PC-3 (cell line): ENCODE measurements at regions of chr2 and their contacts with region 1.

Region 1: DNA sequence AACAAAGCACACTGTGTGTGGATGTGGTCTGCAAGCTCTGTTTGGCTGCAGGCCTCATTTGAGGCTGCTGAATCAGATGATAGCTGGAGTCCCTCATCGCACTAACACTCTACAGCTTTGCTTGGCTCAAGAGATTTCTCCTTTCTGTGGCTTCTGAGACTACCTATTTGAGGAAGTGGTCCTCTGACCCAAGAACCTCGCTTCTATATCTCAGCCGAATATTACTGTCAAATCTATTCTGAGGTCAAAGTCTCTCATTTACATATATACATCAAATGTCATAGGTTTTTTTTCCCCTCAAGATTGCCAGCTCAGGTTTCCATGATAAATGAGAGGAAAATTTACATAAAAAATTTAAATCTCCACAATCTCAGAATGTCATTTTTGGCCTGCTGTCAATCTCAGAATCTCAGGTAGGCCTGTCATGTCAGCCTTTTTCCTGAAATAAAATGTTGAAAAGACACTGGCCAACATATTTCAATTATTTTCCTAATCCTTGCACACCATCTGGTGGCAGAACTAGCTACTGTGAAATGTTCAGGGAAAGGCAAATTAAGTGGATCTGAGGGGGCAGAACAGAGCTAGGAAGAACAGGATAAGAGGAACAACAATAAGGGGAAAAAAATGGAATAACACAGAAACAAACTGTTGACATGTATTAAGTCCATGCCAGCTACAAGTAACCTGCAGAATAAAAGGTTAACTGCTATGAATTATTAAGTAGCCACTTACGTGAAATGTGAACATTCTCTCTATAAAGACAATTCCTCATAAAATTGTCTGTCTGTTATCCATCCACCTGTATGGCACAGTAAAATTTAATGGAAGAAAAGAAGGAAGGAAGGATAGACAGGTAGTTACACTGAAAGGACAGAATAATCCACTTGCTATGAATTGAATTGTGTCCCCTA is 39.3 kb downstream of the AP1S3 start:
- DNase-seq: peak; percentile 69
- ATAC-seq: peak; percentile 13
- H3K4me3 ChIP-seq: peak overlapping the region; percentile 39; the same call in 1 of the 2 replicates
- H3K27ac ChIP-seq: peak overlapping the region; percentile 97
- H3K4me1 ChIP-seq: peaks cover 70% of the 10 kb centered on the region
- H3K27me3 ChIP-seq: no peaks in the 10 kb centered on the region
- CTCF ChIP-seq: peak; percentile 84

Region 2: DNA sequence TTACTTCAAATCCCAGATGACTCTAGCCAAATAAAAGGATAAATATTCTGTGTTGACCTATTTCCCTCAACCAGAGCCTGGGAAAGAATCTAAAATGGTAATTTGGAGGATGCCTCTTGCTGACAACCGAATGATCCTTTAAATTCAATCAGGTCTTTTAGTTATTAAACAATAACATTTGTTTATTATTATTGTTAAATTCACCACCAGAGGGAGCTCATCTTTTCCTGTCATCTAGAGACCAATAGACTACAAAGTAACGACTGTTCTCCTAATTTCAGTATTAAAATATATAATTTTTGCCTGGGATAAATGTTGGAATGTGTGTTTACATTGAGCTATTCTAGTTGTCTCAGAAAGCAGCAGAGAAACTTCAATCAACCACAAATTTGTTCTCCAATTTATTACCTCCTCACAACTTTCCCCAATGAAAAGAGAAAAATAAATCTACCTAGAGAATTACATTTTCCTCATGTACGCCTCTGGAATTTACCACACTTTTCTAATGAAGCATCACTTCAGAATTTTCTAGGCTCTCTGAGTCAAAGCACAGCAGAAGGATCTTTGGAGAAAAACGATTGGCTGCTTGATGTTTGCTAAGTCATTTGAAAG is 338.6 kb before region 1 on chr2:
- CTCF ChIA-PET with region 1: no interaction called
- POLR2A ChIA-PET with region 1: no interaction called
- intact Hi-C with region 1: loop called (anchors 5 kb)
- DNase-seq: peak; percentile 62
- ATAC-seq: no peak
- H3K4me3 ChIP-seq: no peak overlapping the region
- H3K27ac ChIP-seq: no peak overlapping the region
- H3K4me1 ChIP-seq: peaks cover 27% of the 10 kb centered on the region
- H3K27me3 ChIP-seq: no peaks in the 10 kb centered on the region
- CTCF ChIP-seq: peak; percentile 66

Region 3: GRCh38 chr2:223613017-223613950 is 184.8 kb before region 1 on chr2:
- CTCF ChIA-PET with region 1: no interaction called
- POLR2A ChIA-PET with region 1: no interaction called
- intact Hi-C with region 1: loop called (anchors 10 kb)
- DNase-seq: peak; percentile 91
- ATAC-seq: peak; percentile 100
- H3K4me3 ChIP-seq: peak overlapping the region; percentile 63
- H3K27ac ChIP-seq: peak overlapping the region; percentile 60
- H3K4me1 ChIP-seq: peaks cover 10% of the 10 kb centered on the region
- H3K27me3 ChIP-seq: no peaks in the 10 kb centered on the region
- CTCF ChIP-seq: no peak

Region 4: GRCh38 chr2:223692191-223692947 is 105.7 kb before region 1 on chr2:
- CTCF ChIA-PET with region 1: interaction called, 6 read pairs
- POLR2A ChIA-PET with region 1: no interaction called
- intact Hi-C with region 1: loop called (anchors 1 kb)
- DNase-seq: peak; percentile 79
- ATAC-seq: peak; percentile 70
- H3K4me3 ChIP-seq: no peak overlapping the region
- H3K27ac ChIP-seq: no peak overlapping the region; the same call in 1 of the 2 replicates
- H3K4me1 ChIP-seq: peaks cover 16% of the 10 kb centered on the region
- H3K27me3 ChIP-seq: no peaks in the 10 kb centered on the region
- CTCF ChIP-seq: peak; percentile 89

Region 5: DNA sequence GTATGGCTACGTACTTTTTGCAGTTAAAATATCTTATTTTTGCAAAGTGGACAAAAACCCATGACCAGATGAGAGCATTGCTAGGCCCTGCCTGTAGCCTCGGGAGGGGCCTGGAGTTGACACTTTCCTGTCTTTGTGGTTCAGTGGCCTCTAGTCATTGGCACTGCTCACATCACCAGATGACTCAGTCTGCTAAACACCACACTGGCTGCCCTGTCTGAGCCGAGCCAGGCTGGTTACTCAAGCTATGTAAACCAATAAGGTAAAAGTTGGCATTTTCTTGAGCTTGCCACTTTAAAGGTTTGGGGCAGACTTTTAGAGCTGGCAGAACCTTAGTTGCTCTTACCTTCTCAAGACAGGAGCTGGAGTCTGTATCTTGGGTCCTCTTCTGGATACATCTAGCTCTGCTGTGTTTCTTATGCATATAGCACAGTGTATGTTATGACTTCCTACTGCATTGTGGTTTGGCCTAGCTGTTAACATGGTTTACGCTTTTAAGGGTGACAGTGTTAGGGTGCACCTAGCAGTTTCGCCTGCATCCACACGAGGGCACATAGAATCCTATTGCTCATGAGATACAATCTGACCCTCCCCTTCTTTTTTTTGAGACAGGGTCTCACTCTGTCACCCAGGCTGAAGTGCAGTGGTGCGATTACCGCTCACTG is 37.1 kb before region 1 on chr2:
- CTCF ChIA-PET with region 1: interaction called, 7 read pairs
- POLR2A ChIA-PET with region 1: no interaction called
- intact Hi-C with region 1: loop called (anchors 1 kb)
- DNase-seq: peak; percentile 96
- ATAC-seq: peak; percentile 95
- H3K4me3 ChIP-seq: peak overlapping the region; percentile 27; the same call in 1 of the 2 replicates
- H3K27ac ChIP-seq: peak overlapping the region; percentile 99
- H3K4me1 ChIP-seq: peaks cover 36% of the 10 kb centered on the region
- H3K27me3 ChIP-seq: no peaks in the 10 kb centered on the region
- CTCF ChIP-seq: peak; percentile 62

Region 6: DNA sequence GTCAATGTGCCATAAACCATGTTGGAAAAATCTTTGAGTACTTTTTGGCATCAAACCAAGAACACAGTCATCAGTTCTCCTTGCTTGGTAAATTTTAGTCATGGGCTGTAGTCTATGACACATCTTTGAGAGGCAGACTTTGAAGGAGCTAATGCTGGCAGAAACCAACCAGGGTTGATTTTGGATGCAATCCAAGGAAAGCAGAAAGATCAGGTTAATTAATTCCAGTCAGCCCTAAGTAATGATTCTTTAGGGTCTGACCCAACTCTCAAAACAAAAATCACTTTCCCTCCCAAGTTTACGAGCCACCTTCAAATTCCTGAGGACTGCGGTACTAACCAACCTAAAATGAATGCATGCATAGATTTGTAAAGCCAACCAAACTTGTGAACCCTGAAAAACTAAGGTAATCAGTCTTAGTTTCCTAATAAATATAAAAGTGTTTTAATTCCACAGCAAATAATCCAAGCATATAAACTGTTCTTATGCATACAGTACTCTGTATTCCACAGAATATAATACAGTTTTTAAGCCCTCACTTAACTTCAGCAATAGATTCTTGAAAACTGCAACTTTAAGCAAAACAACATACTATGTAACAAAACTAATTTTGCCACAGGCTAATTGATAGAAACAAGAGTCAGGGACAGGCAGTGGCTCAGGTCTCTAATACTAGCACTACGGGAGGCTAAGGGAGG is 17.3 kb after region 1 on chr2:
- CTCF ChIA-PET with region 1: no interaction called
- POLR2A ChIA-PET with region 1: no interaction called
- intact Hi-C with region 1: loop called (anchors 1 kb)
- DNase-seq: peak; percentile 98
- ATAC-seq: peak; percentile 75
- H3K4me3 ChIP-seq: peak overlapping the region; percentile 29; the same call in 1 of the 2 replicates
- H3K27ac ChIP-seq: peak overlapping the region; percentile 85
- H3K4me1 ChIP-seq: peaks cover 58% of the 10 kb centered on the region
- H3K27me3 ChIP-seq: no peaks in the 10 kb centered on the region
- CTCF ChIP-seq: no peak

Region 7: GRCh38 chr2:223860809-223861738 is 63.0 kb after region 1 on chr2:
- CTCF ChIA-PET with region 1: interaction called, 8 read pairs
- POLR2A ChIA-PET with region 1: interaction called, 4 read pairs
- intact Hi-C with region 1: loop called (anchors 1 kb)
- DNase-seq: peak; percentile 95
- ATAC-seq: peak; percentile 87
- H3K4me3 ChIP-seq: peak overlapping the region; percentile 36; the same call in 1 of the 2 replicates
- H3K27ac ChIP-seq: peak overlapping the region; percentile 97
- H3K4me1 ChIP-seq: peaks cover 42% of the 10 kb centered on the region
- H3K27me3 ChIP-seq: no peaks in the 10 kb centered on the region
- CTCF ChIP-seq: peak; percentile 50

Region 8: DNA sequence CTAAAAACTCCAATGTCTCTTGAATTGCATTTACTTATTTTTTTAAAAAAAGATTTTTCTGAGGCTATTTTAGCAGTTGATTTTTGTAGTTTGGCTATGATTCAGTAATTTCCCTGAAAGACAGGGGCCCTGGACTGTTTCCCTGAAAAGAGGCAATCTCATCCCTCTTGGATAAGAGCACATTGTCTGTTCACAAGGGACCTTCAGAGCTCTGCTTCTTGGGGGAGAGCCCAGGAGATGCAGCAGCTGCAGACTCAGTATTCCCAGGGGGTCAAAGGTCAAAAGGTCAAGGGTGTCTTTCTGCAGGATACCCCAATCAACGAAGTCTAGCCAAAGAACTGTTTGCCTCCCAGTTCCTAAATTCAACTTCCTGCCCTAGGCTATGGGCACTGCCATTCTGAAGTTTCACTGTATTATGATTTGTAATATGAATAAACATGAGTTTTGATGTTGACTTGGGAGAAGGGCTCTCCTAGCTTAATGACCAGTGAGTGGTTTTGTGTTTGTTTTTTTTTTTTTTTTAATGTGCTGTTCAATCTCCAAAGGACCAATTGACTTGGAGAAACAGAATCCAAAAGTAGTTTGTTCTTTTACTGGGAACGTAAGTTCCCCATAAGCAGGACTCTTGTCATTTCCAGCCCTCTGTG is 398.0 kb after region 1 on chr2:
- CTCF ChIA-PET with region 1: no interaction called
- POLR2A ChIA-PET with region 1: no interaction called
- intact Hi-C with region 1: no loop called
- DNase-seq: no peak
- ATAC-seq: no peak
- H3K4me3 ChIP-seq: no peak overlapping the region
- H3K27ac ChIP-seq: no peak overlapping the region
- H3K4me1 ChIP-seq: no peaks in the 10 kb centered on the region
- H3K27me3 ChIP-seq: no peaks in the 10 kb centered on the region
- CTCF ChIP-seq: no peak